PC-9 (cell line): ENCODE measurements at regions of chr3 and their contacts with region 1.

Region 1: GRCh38 chr3:99866261-99866761 is 48.6 kb downstream of the CMSS1 start:
- DNase-seq: no peak
- H3K4me3 ChIP-seq: no peak overlapping the region
- H3K27ac ChIP-seq: no peak overlapping the region
- H3K4me1 ChIP-seq: peaks cover 26% of the 10 kb centered on the region
- H3K27me3 ChIP-seq: no peaks in the 10 kb centered on the region
- CTCF ChIP-seq: no peak

Region 2: DNA sequence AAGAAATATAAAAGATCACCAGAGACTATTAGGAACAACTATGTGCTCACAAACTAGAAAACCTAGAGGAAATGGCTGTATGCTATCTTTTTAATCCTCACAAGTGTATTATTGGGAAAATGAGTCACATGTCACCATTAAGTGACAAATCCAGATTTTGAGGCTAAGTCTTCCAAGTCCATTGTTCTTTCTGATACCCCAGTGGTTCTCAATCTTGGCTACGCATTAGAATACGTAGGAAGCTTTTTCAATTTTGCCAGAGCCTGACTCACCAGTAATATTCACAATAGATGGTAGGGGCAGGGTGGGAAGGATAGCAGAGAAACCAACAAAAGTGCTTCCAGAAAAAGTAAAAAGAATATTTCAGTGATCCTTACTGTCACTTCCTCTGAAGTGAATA is 131.0 kb after region 1 on chr3:
- CTCF ChIA-PET with region 1: no interaction called
- POLR2A ChIA-PET with region 1: no interaction called
- intact Hi-C with region 1: loop called (anchors 1 kb)
- DNase-seq: no peak
- H3K4me3 ChIP-seq: no peak overlapping the region
- H3K27ac ChIP-seq: no peak overlapping the region
- H3K4me1 ChIP-seq: peaks cover 14% of the 10 kb centered on the region
- H3K27me3 ChIP-seq: no peaks in the 10 kb centered on the region
- CTCF ChIP-seq: no peak